K562 (cell line): ENCODE measurements at regions of chr5 and their contacts with region 1.

Region 1: DNA sequence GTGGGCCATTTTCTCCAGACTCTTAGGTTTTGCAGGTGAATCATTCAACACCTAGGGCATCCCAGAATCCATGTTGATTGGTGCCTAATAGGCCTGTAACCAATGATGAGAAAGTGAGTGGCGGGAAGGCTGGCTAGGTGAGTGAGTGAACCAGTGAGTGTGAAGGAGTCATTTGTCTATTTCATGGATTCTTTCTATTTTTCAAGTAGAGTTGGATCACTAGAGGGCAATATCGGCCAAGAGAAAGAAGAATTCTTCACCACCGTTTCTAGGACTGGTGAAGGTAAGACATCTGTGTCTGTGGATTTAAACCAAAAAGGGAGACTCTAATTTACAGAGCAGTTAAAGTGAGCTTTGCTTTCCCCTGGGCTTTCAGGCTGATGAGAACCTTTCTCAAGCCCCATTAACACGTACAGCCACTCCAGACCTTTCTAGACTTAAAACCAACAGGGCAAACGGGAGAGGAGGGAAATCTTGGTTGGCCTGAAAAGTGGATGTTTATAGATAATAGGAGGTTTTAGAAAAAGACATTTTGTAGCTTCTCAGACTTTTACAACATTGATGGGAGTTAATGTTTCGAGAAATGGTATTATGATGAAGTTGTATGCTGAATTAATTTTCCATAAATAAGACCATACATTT is 114.3 kb upstream of the IL12B start:
- DNase-seq: peak in 2 of 4 experiments; percentile 20 to 30
- ATAC-seq: peak; percentile 74; the same call in 2 of the 3 replicates
- H3K4me3 ChIP-seq: no peak overlapping the region
- H3K27ac ChIP-seq: no peak overlapping the region
- H3K4me1 ChIP-seq: no peaks in the 10 kb centered on the region
- H3K27me3 ChIP-seq: peaks cover 0 to 10% of the 10 kb centered on the region in 2 experiments; a peak in 1 of 5 replicates
- CTCF ChIP-seq: peak; percentile 26 to 61 (median 39); a peak in 3 of 6 replicates
- EP300 ChIP-seq: no peak
- POLR2A ChIP-seq: no peak
- RAD21 ChIP-seq: peak; percentile 85 to 89

Region 2: GRCh38 chr5:159156426-159157238 is 287.9 kb before region 1 on chr5:
- CTCF ChIA-PET with region 1: interaction called, 3 read pairs
- POLR2A ChIA-PET with region 1: no interaction called
- in situ Hi-C with region 1: no loop called
- intact Hi-C with region 1: loop called (anchors 10 kb)
- DNase-seq: peak; percentile 71 to 80 (median 72)
- ATAC-seq: peak; percentile 97
- H3K4me3 ChIP-seq: no peak overlapping the region
- H3K27ac ChIP-seq: no peak overlapping the region
- H3K4me1 ChIP-seq: no peaks in the 10 kb centered on the region
- H3K27me3 ChIP-seq: no peaks in the 10 kb centered on the region
- CTCF ChIP-seq: peak; percentile 66 to 87 (median 76); a peak in 5 of 6 replicates
- EP300 ChIP-seq: no peak
- POLR2A ChIP-seq: no peak
- RAD21 ChIP-seq: peak; percentile 86 to 91

Region 3: GRCh38 chr5:159497221-159497620 is 52.7 kb after region 1 on chr5:
- CTCF ChIA-PET with region 1: no interaction called
- POLR2A ChIA-PET with region 1: no interaction called
- in situ Hi-C with region 1: no loop called
- intact Hi-C with region 1: no loop called
- DNase-seq: no peak
- ATAC-seq: no peak
- H3K4me3 ChIP-seq: no peak overlapping the region
- H3K27ac ChIP-seq: no peak overlapping the region
- H3K4me1 ChIP-seq: no peaks in the 10 kb centered on the region
- H3K27me3 ChIP-seq: no peaks in the 10 kb centered on the region; a peak in 1 of 5 replicates
- CTCF ChIP-seq: no peak
- EP300 ChIP-seq: no peak
- POLR2A ChIP-seq: no peak
- RAD21 ChIP-seq: no peak

Region 4: DNA sequence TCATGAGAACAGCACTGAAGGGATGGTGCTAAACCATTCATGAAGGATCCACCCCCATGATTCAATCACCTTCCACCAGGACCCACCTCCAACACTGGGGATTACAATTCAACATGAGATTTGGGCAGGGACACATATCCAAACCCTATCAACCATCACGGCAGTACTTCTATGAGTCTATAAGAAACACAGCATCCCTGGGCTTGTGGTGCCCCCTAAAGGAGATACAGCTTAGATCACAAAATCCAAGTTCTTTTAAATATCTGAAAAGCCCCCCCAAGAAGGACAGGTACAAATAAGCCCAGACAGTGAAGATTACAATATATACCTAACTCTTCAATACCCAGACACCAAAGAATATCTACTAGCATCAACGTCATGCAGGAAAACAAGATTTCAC is 238.1 kb after region 1 on chr5:
- CTCF ChIA-PET with region 1: no interaction called
- POLR2A ChIA-PET with region 1: no interaction called
- in situ Hi-C with region 1: no loop called
- intact Hi-C with region 1: loop called (anchors 5 kb)
- DNase-seq: no peak
- ATAC-seq: no peak
- H3K4me3 ChIP-seq: no peak overlapping the region
- H3K27ac ChIP-seq: no peak overlapping the region
- H3K4me1 ChIP-seq: no peaks in the 10 kb centered on the region
- H3K27me3 ChIP-seq: no peaks in the 10 kb centered on the region
- CTCF ChIP-seq: peak in 1 of 3 experiments; percentile 16; a peak in 1 of 6 replicates
- EP300 ChIP-seq: no peak
- POLR2A ChIP-seq: no peak
- RAD21 ChIP-seq: peak in 1 of 2 experiments; percentile 73; a peak in 3 of 4 replicates

Region 5: GRCh38 chr5:159915904-159916840 is 471.6 kb after region 1 on chr5 and contains the start of gene ADRA1B:
- CTCF ChIA-PET with region 1: no interaction called
- POLR2A ChIA-PET with region 1: no interaction called
- in situ Hi-C with region 1: no loop called
- intact Hi-C with region 1: loop called (anchors 5 kb)
- DNase-seq: peak; percentile 21 to 77 (median 67)
- ATAC-seq: peak; percentile 94
- H3K4me3 ChIP-seq: no peak within 1 kb of the TSS
- H3K27ac ChIP-seq: no peak within 1 kb of the TSS
- H3K4me1 ChIP-seq: peaks cover 0 to 4% of the 10 kb centered on the region in 2 experiments; a peak in 1 of 5 replicates
- H3K27me3 ChIP-seq: peaks cover 13 to 34% of the 10 kb centered on the region in 2 experiments; a peak in 3 of 5 replicates
- CTCF ChIP-seq: peak in 2 of 3 experiments; percentile 55 to 58; a peak in 4 of 6 replicates
- EP300 ChIP-seq: no peak
- POLR2A ChIP-seq: no peak
- RAD21 ChIP-seq: peak; percentile 66 to 84
- polyA plus RNA-seq, gene ADRA1B: not detected

Region 6: GRCh38 chr5:159965031-159965837 is 520.7 kb after region 1 on chr5:
- CTCF ChIA-PET with region 1: no interaction called
- POLR2A ChIA-PET with region 1: no interaction called
- in situ Hi-C with region 1: loop called (anchors 10 kb)
- intact Hi-C with region 1: loop called (anchors 1 kb)
- DNase-seq: peak in 3 of 4 experiments; percentile 15 to 50 (median 43)
- ATAC-seq: peak; percentile 92
- H3K4me3 ChIP-seq: no peak overlapping the region
- H3K27ac ChIP-seq: no peak overlapping the region
- H3K4me1 ChIP-seq: no peaks in the 10 kb centered on the region
- H3K27me3 ChIP-seq: peaks cover under 1 to 15% of the 10 kb centered on the region in 2 experiments; a peak in 3 of 5 replicates
- CTCF ChIP-seq: peak; percentile 59 to 66 (median 60)
- EP300 ChIP-seq: no peak
- POLR2A ChIP-seq: no peak
- RAD21 ChIP-seq: peak; percentile 66 to 74

Region 7: DNA sequence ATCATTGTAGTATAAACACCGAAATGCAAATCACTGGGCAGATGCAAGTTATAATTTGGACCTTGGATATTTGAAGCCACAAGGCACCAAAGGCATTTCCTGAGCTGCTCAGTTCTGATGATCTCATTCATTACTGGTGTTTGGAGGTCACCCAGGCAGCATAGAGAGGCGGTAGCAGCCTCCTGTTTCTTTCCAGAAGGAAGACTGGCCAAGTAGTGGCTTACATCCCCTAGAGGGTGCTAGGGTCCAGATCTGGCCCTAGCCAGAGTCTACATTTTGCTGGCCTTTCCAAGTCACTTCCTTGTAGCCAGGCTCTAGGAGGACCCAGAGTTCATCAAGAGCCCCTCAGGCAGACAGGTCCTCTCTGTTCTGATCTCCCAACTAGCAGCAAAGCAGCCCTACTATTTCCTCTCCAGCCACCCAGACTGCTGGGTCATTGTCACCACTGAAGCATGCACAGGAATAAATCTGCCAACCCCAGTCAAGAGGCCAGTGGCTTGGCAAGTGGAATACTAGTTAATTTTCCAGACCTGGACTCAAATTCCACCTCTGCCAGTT is 531.0 kb after region 1 on chr5:
- CTCF ChIA-PET with region 1: no interaction called
- POLR2A ChIA-PET with region 1: no interaction called
- in situ Hi-C with region 1: loop called (anchors 10 kb)
- intact Hi-C with region 1: no loop called
- DNase-seq: peak in 2 of 4 experiments; percentile 11 to 17
- ATAC-seq: peak; percentile 82
- H3K4me3 ChIP-seq: no peak overlapping the region
- H3K27ac ChIP-seq: no peak overlapping the region
- H3K4me1 ChIP-seq: peaks cover 0 to 3% of the 10 kb centered on the region in 2 experiments; a peak in 1 of 5 replicates
- H3K27me3 ChIP-seq: peaks cover 22 to 41% of the 10 kb centered on the region in 2 experiments
- CTCF ChIP-seq: peak; percentile 19 to 41 (median 29); a peak in 2 of 6 replicates
- EP300 ChIP-seq: no peak
- POLR2A ChIP-seq: no peak
- RAD21 ChIP-seq: peak in 1 of 2 experiments; percentile 39; a peak in 2 of 4 replicates

Region 8: DNA sequence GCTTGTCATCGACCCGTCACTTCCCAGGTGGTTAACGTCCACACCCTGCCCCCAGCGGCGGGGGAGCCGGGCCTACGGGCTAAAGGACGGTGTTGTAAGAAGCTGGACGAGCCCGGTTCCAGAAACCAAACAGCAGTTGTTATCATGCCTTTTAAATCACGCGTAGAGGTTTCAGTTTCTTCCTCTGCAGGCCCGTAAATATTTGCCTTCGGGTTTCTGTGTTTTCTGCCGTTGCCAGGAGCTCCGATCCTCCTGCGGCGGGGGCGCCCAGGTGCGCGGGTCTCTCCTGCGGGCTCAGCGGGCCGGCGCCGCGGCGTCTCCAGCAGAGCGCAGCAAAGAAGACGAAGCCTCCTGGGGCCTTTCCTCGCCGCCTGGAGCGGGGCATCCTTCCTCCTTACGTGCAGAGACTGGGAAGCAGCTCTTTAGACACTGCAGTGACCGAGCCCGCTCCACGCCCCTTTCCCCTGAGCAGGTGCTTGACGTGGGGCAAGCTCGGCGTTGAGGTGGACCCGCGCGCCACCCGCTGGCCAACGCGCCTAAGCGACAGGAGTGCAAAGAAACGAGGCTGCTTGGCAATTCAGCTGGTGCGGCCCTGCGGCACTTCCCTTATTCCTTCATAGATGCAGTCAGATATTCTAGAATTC is 542.6 kb after region 1 on chr5:
- CTCF ChIA-PET with region 1: no interaction called
- POLR2A ChIA-PET with region 1: no interaction called
- in situ Hi-C with region 1: no loop called
- intact Hi-C with region 1: loop called (anchors 1 kb)
- DNase-seq: peak; percentile 63 to 70 (median 67)
- ATAC-seq: peak; percentile 99
- H3K4me3 ChIP-seq: no peak overlapping the region
- H3K27ac ChIP-seq: no peak overlapping the region
- H3K4me1 ChIP-seq: peaks cover 0 to 8% of the 10 kb centered on the region in 2 experiments; a peak in 2 of 5 replicates
- H3K27me3 ChIP-seq: peaks cover 10 to 43% of the 10 kb centered on the region in 2 experiments; a peak in 4 of 5 replicates
- CTCF ChIP-seq: peak; percentile 62 to 74 (median 66); a peak in 5 of 6 replicates
- EP300 ChIP-seq: no peak
- POLR2A ChIP-seq: no peak
- RAD21 ChIP-seq: peak; percentile 63 to 81